Naive thymus-derived CD4-positive, alpha-beta T cell (primary cell): ENCODE measurements at regions of chr3 and their contacts with region 1.

Region 1: GRCh38 chr3:111668912-111669488 is 73.9 kb upstream of the ZBED2 start:
- DNase-seq: peak in 7 of 9 donors; percentile 22 to 64 (median 53)
- ATAC-seq: peak; percentile 53
- H3K4me3 ChIP-seq: no peak overlapping the region
- H3K4me3 Mint-ChIP-seq: peak overlapping the region in 8 of 10 donors; percentile 20 to 74 (median 36)
- H3K27ac ChIP-seq: peak overlapping the region; percentile 14
- H3K27ac Mint-ChIP-seq: peak overlapping the region; percentile 26 to 94 (median 76)
- H3K4me1 ChIP-seq: peaks cover 52 to 59% of the 10 kb centered on the region in 2 donors
- H3K4me1 Mint-ChIP-seq: peaks cover 46 to 91% (median 85%) of the 10 kb centered on the region in 7 donors
- H3K27me3 ChIP-seq: no peaks in the 10 kb centered on the region
- H3K27me3 Mint-ChIP-seq: no peaks in the 10 kb centered on the region

Region 2: DNA sequence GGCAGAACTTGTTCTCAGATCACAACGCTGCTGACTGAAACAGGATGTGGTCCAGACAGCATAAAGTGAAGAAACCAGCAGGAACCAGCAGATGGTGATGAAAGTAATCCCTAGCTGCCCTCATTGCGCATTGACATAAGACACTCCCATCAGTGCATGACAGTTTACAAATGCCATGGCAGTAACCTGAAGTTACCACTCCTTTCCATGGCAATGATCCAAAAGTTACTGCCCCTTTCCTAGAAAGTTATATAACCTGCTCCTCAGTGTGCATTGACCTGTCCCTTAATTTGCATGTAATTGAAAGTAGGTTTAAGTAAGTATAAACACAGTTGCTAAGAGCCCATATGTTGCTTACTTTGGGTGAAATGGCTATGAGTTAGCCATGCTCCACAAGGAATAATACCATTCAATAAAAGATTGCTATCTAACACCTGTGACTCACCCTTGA is 276.1 kb before region 1 on chr3:
- CTCF ChIA-PET with region 1: no interaction called
- POLR2A ChIA-PET with region 1: no interaction called
- intact Hi-C with region 1: loop called in 1 of 2 experiments (anchors 2 kb)
- DNase-seq: peak in 7 of 9 donors; percentile 40 to 78 (median 75)
- ATAC-seq: peak; percentile 99
- H3K4me3 ChIP-seq: no peak overlapping the region
- H3K4me3 Mint-ChIP-seq: peak overlapping the region in 9 of 10 donors; percentile 1 to 59 (median 22)
- H3K27ac ChIP-seq: peak overlapping the region; percentile 25
- H3K27ac Mint-ChIP-seq: peak overlapping the region in 8 of 9 donors; percentile 65 to 96 (median 88)
- H3K4me1 ChIP-seq: peaks cover 0 to 13% of the 10 kb centered on the region in 2 donors
- H3K4me1 Mint-ChIP-seq: peaks cover 10 to 29% (median 23%) of the 10 kb centered on the region in 7 donors
- H3K27me3 ChIP-seq: no peaks in the 10 kb centered on the region
- H3K27me3 Mint-ChIP-seq: no peaks in the 10 kb centered on the region

Region 3: DNA sequence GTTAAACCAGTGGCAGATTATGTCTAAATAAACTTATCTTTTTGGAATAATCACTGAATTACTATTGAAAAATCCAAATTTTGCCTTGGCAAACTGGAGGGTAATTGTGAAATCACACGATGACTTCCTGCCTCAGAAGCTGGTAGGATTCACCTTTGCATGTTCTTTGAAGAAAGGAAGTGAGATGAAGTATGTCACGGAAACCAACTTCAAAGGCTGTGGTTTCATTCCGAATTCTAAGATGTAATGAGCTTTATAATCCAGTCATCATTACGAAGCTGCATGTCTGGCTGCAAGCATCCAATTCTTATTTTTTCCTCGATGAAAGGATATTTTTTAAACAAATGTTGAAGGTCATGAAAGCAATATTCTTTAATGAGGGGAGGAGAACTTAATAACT is 58.8 kb before region 1 on chr3:
- CTCF ChIA-PET with region 1: no interaction called
- POLR2A ChIA-PET with region 1: no interaction called
- intact Hi-C with region 1: loop called (anchors 1 kb)
- DNase-seq: peak in 7 of 9 donors; percentile 79 to 91 (median 89)
- ATAC-seq: peak; percentile 94
- H3K4me3 ChIP-seq: peak overlapping the region; percentile 2
- H3K4me3 Mint-ChIP-seq: peak overlapping the region; percentile 48 to 84 (median 74)
- H3K27ac ChIP-seq: peak overlapping the region; percentile 47
- H3K27ac Mint-ChIP-seq: peak overlapping the region; percentile 41 to 96 (median 90)
- H3K4me1 ChIP-seq: peaks cover 27 to 38% of the 10 kb centered on the region in 2 donors
- H3K4me1 Mint-ChIP-seq: peaks cover 32 to 90% (median 61%) of the 10 kb centered on the region in 7 donors
- H3K27me3 ChIP-seq: no peaks in the 10 kb centered on the region
- H3K27me3 Mint-ChIP-seq: no peaks in the 10 kb centered on the region

Region 4: GRCh38 chr3:111691293-111691909 is 22.4 kb after region 1 on chr3:
- CTCF ChIA-PET with region 1: interaction called, 6 read pairs
- POLR2A ChIA-PET with region 1: interaction called, 5 read pairs
- intact Hi-C with region 1: loop called (anchors 1 kb)
- DNase-seq: peak in 6 of 9 donors; percentile 17 to 46 (median 36)
- ATAC-seq: peak; percentile 64
- H3K4me3 ChIP-seq: no peak overlapping the region
- H3K4me3 Mint-ChIP-seq: no peak overlapping the region
- H3K27ac ChIP-seq: no peak overlapping the region
- H3K27ac Mint-ChIP-seq: peak overlapping the region in 2 of 9 donors; percentile 38 to 62
- H3K4me1 ChIP-seq: peaks cover 5 to 12% of the 10 kb centered on the region in 2 donors
- H3K4me1 Mint-ChIP-seq: peaks cover 5 to 66% (median 58%) of the 10 kb centered on the region in 7 donors
- H3K27me3 ChIP-seq: no peaks in the 10 kb centered on the region
- H3K27me3 Mint-ChIP-seq: no peaks in the 10 kb centered on the region

Region 5: GRCh38 chr3:111773484-111773883 is 104.5 kb after region 1 on chr3:
- CTCF ChIA-PET with region 1: no interaction called
- POLR2A ChIA-PET with region 1: no interaction called
- intact Hi-C with region 1: no loop called
- DNase-seq: no peak
- ATAC-seq: no peak
- H3K4me3 ChIP-seq: no peak overlapping the region
- H3K4me3 Mint-ChIP-seq: no peak overlapping the region
- H3K27ac ChIP-seq: no peak overlapping the region
- H3K27ac Mint-ChIP-seq: no peak overlapping the region
- H3K4me1 ChIP-seq: no peaks in the 10 kb centered on the region
- H3K4me1 Mint-ChIP-seq: peaks cover 0 to 5% (median 0%) of the 10 kb centered on the region in 7 donors
- H3K27me3 ChIP-seq: no peaks in the 10 kb centered on the region
- H3K27me3 Mint-ChIP-seq: peaks cover 0 to 3% (median 0%) of the 10 kb centered on the region in 5 donors

Region 6: DNA sequence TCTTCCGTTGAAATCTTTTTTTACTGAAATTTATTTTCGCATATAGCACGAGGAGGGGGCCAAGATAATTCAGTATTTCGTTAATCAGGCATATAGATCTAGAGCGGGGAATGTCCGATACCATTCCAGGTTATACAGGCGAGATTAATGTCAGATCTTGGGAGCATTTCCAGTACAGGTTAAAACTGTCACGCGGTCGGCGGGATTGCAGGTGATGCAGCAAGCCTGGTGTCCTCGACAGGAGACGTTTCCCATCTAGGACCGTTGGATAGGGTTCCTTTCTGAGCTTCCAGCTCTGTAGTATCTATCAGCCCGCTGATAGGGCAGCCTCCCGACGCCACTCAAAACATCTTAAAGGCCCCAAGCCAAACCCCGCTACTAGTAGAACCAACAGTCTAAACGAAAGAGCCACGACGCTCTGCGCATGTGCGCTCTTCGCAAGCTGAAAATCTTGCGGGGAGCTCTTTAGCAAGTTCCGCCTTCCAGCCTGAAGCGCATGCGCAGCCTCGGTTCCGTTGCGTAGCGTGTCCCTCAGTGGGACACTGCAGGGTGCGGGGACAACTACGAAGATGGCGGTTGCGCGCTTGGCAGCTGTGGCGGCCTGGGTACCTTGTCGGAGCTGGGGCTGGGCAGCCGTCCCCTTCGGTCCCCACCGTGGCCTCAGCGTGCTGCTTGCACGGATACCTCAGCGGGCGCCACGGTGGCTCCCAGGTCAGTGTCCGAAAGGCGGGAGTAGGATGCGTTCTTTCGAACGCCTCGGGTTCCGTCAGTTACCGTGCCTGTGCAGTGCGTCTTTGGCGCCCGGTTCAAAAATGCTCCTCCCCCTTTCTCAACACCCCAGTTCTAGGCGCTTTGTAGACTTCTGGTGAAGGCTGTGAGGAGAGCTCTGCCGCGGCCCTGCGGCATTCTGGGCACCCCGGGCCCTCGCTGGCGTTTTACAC is 309.8 kb after region 1 on chr3 and contains the start of gene ABHD10:
- CTCF ChIA-PET with region 1: no interaction called
- POLR2A ChIA-PET with region 1: interaction called, 10 read pairs
- intact Hi-C with region 1: no loop called
- DNase-seq: peak; percentile 90 to 97 (median 93)
- ATAC-seq: peak; percentile 95
- H3K4me3 ChIP-seq: peak within 1 kb of the TSS; percentile 83
- H3K4me3 Mint-ChIP-seq: peak within 1 kb of the TSS; percentile 82 to 97 (median 92)
- H3K27ac ChIP-seq: peak within 1 kb of the TSS; percentile 75
- H3K27ac Mint-ChIP-seq: peak within 1 kb of the TSS; percentile 92 to 96 (median 94)
- H3K4me1 ChIP-seq: peaks cover 16 to 24% of the 10 kb centered on the region in 2 donors
- H3K4me1 Mint-ChIP-seq: peaks cover 19 to 54% (median 44%) of the 10 kb centered on the region in 7 donors
- H3K27me3 ChIP-seq: no peaks in the 10 kb centered on the region
- H3K27me3 Mint-ChIP-seq: peaks cover 0 to 25% (median 0%) of the 10 kb centered on the region in 5 donors
- total RNA-seq, gene ABHD10: 18.4 to 43.6 (median 34.9) TPM

Region 7: DNA sequence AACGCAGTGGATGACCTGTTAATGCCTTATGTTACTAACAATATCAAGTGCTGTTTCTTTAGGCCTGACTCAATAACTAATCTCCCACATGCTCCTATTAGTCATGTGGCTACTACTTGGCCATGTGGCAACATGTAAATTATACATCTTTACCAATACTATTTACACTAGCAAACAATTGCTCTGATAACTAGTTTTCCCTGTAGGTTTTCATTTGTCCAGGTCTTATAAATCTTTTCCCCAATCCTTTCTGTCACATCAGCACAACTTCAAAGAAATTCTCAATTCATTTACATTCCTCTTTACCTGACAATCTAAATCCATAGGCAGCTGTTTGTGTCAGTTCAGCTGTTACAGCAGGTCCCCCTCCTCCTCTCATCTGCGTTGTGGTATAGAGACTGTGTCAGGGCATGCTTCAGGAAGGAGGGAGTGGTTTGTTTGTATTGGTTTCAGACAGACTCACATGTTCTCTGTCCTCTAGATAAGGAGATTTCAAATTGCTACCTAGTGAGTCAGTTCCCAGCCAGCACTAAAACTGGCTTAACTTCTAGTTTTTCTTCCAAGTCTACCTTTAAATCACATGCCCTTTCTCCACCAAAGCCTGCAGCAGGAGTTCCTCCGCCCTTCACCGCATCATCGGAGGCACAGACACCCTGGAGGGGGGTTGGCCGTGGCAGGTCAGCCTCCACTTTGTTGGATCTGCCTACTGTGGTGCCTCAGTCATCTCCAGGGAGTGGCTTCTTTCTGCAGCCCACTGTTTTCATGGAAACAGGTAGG is 405.9 kb after region 1 on chr3:
- CTCF ChIA-PET with region 1: no interaction called
- POLR2A ChIA-PET with region 1: no interaction called
- intact Hi-C with region 1: loop called (anchors 2 to 5 kb)
- DNase-seq: peak in 8 of 9 donors; percentile 29 to 60 (median 52)
- ATAC-seq: peak; percentile 88
- H3K4me3 ChIP-seq: no peak overlapping the region
- H3K4me3 Mint-ChIP-seq: peak overlapping the region; percentile 32 to 76 (median 56)
- H3K27ac ChIP-seq: peak overlapping the region; percentile 32
- H3K27ac Mint-ChIP-seq: peak overlapping the region; percentile 72 to 95 (median 85)
- H3K4me1 ChIP-seq: peaks cover 4 to 17% of the 10 kb centered on the region in 2 donors
- H3K4me1 Mint-ChIP-seq: peaks cover 17 to 57% (median 51%) of the 10 kb centered on the region in 7 donors
- H3K27me3 ChIP-seq: no peaks in the 10 kb centered on the region
- H3K27me3 Mint-ChIP-seq: peaks cover 0 to 3% (median 0%) of the 10 kb centered on the region in 5 donors